ENCODE measurements at regions of chr1 and their contacts with region 1.

Region 1: GRCh38 chr1:175023043-175023921 is at the start of gene MRPS14:
- DNase-seq: peak; percentile 99
- ATAC-seq: peak; percentile 92
- H3K4me3 Mint-ChIP-seq: peak within 1 kb of the TSS; percentile 87
- H3K27ac Mint-ChIP-seq: peak within 1 kb of the TSS; percentile 92
- H3K4me1 Mint-ChIP-seq: peaks cover 25% of the 10 kb centered on the region
- H3K27me3 Mint-ChIP-seq: no peaks in the 10 kb centered on the region
- total RNA-seq, gene MRPS14: 38.7 to 43.7 TPM

Region 2: DNA sequence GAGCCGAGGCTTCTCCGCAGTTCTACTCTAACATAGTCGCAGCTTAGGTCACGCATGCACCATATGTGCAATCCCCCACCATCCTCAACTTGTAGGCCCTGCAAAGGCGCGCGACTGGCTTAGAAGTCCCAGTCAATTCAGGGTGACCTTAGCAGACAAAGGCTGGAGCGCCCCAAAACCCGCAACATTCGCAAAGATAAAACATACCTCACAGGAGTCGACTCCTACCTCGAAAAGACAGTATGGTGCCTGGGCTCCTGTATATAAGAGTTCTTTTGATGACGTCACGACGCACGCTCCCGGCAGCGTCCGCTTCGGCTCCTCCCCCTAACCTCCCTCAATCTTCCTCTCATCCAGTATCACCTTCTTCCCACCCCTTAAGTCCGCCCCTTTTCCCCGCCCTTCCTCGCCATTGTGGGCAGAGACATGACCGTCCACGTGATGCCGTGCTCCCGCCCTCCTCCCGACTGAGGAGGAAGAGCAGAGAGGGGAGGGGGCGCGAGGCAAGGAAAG is 1155.5 kb before region 1 on chr1 and contains the start of gene GAS5:
- CTCF ChIA-PET with region 1: no interaction called
- POLR2A ChIA-PET with region 1: no interaction called
- intact Hi-C with region 1: loop called in 1 of 2 experiments (anchors 10 kb)
- DNase-seq: peak; percentile 100
- ATAC-seq: peak; percentile 82
- H3K4me3 Mint-ChIP-seq: peak within 1 kb of the TSS; percentile 91
- H3K27ac Mint-ChIP-seq: peak within 1 kb of the TSS; percentile 97
- H3K4me1 Mint-ChIP-seq: peaks cover 57% of the 10 kb centered on the region
- H3K27me3 Mint-ChIP-seq: no peaks in the 10 kb centered on the region
- total RNA-seq, gene GAS5: 878 to 1,203 TPM

Region 3: GRCh38 chr1:175124861-175125260 is 101.6 kb after region 1 on chr1:
- CTCF ChIA-PET with region 1: interaction called, 14 read pairs
- POLR2A ChIA-PET with region 1: no interaction called
- intact Hi-C with region 1: no loop called
- DNase-seq: no peak
- ATAC-seq: no peak
- H3K4me3 Mint-ChIP-seq: no peak overlapping the region
- H3K27ac Mint-ChIP-seq: no peak overlapping the region
- H3K4me1 Mint-ChIP-seq: no peaks in the 10 kb centered on the region
- H3K27me3 Mint-ChIP-seq: no peaks in the 10 kb centered on the region

Region 4: DNA sequence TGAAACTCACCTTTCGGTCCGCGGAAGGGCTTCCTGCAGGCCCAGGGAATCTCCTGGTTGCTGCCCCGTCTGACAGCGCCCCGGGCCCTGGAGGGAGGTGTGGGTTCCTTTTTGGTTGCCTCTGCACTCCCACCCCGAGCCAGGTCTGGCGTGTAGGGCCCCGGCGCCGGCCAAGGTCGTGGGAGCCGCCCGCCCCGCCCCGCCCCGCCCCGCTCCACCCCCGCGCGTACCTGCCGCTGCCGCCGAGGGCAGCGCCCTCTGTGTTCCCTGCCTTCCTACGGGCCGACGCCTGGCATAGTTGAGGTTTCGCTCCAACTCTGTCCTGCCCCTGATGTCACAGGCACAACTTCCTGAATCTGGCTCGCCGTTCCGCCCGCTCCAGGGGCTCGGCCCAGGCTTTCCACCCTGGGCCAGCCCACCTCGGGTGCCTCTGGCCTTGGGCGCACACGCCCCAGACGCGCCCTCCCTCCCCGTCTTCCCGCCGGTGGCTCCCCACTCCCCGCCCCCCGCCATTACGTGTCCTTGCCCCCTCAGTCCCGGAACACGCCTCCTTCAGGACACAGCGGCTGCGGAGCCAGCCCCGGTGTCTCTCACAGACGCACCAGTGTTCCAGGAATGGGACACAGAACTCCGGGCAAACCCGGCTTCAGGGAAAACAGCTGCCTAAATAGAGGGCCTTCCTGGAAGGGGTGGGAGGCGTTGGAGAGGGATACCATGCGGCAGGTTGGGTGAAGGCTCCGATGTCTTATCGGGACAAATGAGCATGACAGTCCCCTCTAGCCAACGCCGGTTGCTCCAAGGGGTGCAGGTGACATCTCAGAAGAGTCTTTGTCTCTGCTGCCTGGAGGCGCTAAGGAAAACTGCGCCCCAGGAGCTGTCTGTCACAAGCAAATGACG is 169.6 kb after region 1 on chr1 and contains the start of gene KIAA0040:
- CTCF ChIA-PET with region 1: interaction called, 5 read pairs
- POLR2A ChIA-PET with region 1: interaction called, 3 read pairs
- intact Hi-C with region 1: loop called (anchors 1 to 5 kb)
- DNase-seq: peak; percentile 81
- ATAC-seq: peak; percentile 65
- H3K4me3 Mint-ChIP-seq: peak within 1 kb of the TSS; percentile 99
- H3K27ac Mint-ChIP-seq: peak within 1 kb of the TSS; percentile 93
- H3K4me1 Mint-ChIP-seq: peaks cover 47% of the 10 kb centered on the region
- H3K27me3 Mint-ChIP-seq: no peaks in the 10 kb centered on the region
- total RNA-seq, gene KIAA0040: 25.4 to 26.1 TPM

Region 5: DNA sequence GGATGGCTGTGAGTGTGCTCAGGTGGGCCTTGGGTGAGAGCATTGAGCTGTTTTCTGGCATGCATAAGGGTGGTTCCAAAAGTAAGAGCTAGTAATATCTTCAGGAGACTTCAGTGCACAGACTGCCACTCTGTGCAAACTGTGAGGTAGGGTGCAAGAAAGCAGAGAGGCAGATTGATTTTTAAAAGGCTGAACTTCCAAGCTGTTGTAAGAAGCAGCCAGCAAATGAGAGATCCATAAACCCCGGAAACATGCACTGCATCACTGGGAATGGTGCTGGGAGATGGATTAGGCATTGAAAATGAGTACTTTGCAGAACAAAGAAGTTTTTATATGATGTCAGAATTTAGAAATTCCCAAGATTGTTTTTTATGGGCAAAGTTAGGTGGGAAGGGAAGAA is 464.7 kb after region 1 on chr1:
- CTCF ChIA-PET with region 1: no interaction called
- POLR2A ChIA-PET with region 1: no interaction called
- intact Hi-C with region 1: loop called in 1 of 2 experiments (anchors 5 kb)
- DNase-seq: no peak
- ATAC-seq: no peak
- H3K4me3 Mint-ChIP-seq: no peak overlapping the region
- H3K27ac Mint-ChIP-seq: no peak overlapping the region
- H3K4me1 Mint-ChIP-seq: no peaks in the 10 kb centered on the region
- H3K27me3 Mint-ChIP-seq: peaks cover 23% of the 10 kb centered on the region